ENCODE measurements at regions of chr1 and their contacts with region 1.

Region 1: GRCh38 chr1:161165742-161166668 is at the start of gene PPOX:
- DNase-seq: peak; percentile 78 to 95 (median 93)
- ATAC-seq: peak; percentile 94
- H3K4me3 ChIP-seq: peak within 1 kb of the TSS; percentile 93
- H3K4me3 Mint-ChIP-seq: peak within 1 kb of the TSS; percentile 86 to 98 (median 94)
- H3K27ac ChIP-seq: peak within 1 kb of the TSS; percentile 86
- H3K27ac Mint-ChIP-seq: peak within 1 kb of the TSS; percentile 93 to 99 (median 99)
- H3K4me1 ChIP-seq: peaks cover 14 to 17% of the 10 kb centered on the region in 2 donors
- H3K4me1 Mint-ChIP-seq: peaks cover 38 to 77% (median 66%) of the 10 kb centered on the region in 7 donors
- H3K27me3 ChIP-seq: no peaks in the 10 kb centered on the region
- H3K27me3 Mint-ChIP-seq: no peaks in the 10 kb centered on the region
- total RNA-seq, gene PPOX: 39.7 to 76.2 (median 43.4) TPM

Region 2: GRCh38 chr1:161008924-161009510 is 157.0 kb before region 1 on chr1:
- CTCF ChIA-PET with region 1: no interaction called
- POLR2A ChIA-PET with region 1: no interaction called
- intact Hi-C with region 1: no loop called
- DNase-seq: no peak
- ATAC-seq: no peak
- H3K4me3 ChIP-seq: no peak overlapping the region
- H3K4me3 Mint-ChIP-seq: no peak overlapping the region
- H3K27ac ChIP-seq: no peak overlapping the region
- H3K27ac Mint-ChIP-seq: peak overlapping the region in 2 of 9 donors; percentile 47 to 70
- H3K4me1 ChIP-seq: peaks cover 10 to 24% of the 10 kb centered on the region in 2 donors
- H3K4me1 Mint-ChIP-seq: peaks cover 19 to 33% (median 24%) of the 10 kb centered on the region in 7 donors
- H3K27me3 ChIP-seq: no peaks in the 10 kb centered on the region
- H3K27me3 Mint-ChIP-seq: no peaks in the 10 kb centered on the region

Region 3: DNA sequence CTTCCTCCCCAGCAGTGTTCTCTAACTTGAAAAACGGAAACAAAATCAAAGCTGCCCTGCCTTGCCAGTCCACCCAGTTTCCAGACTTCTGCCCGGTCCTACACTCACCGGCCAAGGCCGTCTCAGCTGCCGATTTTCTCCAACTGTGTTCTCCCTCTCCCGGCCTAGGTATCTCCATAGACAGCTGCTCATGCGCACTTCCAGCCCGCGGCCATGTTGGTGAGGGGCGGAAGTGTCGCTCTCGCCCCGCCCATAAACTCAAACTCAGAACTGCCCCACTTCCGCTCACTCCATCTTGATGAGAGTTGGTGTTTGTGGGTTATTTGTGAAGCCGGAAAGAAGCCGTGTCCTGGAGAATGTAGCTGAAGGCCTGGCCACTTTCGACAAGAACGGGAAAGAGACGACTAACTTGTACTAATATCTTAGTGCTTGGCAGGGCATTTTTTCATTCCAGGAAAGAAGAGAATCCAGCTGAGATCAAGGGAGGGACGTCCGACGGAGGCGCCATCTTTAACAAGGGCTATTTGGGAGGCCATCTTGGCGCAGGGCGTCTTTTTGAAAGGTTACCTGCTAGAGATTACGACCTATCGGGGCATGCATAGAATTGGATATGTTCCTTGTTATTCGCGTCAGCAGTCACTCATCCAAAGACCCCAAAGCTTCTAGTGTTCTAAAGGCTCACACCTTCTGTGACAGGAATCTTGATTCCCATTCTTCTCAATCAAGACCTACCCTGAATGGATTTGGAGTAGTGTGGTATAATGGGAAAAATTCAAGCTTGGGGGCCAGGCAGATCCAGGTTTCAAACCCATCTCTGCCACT is 120.0 kb before region 1 on chr1 and contains the start of gene USF1:
- CTCF ChIA-PET with region 1: interaction called, 3 read pairs
- POLR2A ChIA-PET with region 1: interaction called, 14 read pairs
- intact Hi-C with region 1: no loop called
- DNase-seq: peak; percentile 84 to 96 (median 93)
- ATAC-seq: peak; percentile 89
- H3K4me3 ChIP-seq: peak within 1 kb of the TSS; percentile 93
- H3K4me3 Mint-ChIP-seq: peak within 1 kb of the TSS; percentile 93 to 100 (median 97)
- H3K27ac ChIP-seq: peak within 1 kb of the TSS; percentile 92
- H3K27ac Mint-ChIP-seq: peak within 1 kb of the TSS; percentile 92 to 100 (median 99)
- H3K4me1 ChIP-seq: peaks cover 17 to 23% of the 10 kb centered on the region in 2 donors
- H3K4me1 Mint-ChIP-seq: peaks cover 41 to 54% (median 49%) of the 10 kb centered on the region in 7 donors
- H3K27me3 ChIP-seq: no peaks in the 10 kb centered on the region
- H3K27me3 Mint-ChIP-seq: no peaks in the 10 kb centered on the region
- total RNA-seq, gene USF1: 71.6 to 115 (median 91.7) TPM

Region 4: DNA sequence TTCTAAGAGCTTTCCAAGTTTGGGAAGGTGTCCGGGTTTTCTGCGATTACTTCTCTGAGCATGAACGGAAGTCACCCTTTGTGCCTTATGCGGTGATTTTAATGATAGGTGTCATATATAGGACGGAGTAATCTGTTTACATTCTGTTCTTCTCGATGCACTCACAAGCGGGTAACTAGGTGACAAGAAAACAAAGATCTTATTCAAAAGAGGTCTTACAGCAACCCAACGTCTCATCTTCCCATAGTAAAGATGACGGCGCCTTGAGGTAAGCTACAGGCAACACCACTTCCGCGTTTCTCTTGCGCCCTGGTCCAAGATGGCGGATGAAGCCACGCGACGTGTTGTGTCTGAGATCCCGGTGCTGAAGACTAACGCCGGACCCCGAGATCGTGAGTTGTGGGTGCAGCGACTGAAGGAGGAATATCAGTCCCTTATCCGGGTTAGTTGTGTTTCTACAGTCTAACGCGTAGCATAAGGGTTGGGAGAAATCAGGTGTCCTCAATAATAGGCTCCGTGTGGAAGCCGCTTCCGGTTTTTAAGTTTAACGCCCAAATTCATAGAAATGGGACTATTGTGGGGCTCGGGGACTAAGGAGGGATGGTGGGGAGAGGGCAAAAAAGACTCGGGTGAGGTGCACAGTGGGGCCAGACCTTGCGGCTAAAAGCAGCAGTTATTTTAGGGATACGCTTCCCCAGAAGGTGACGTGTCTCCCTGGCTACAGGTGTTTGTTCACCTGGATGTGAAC is 12.2 kb before region 1 on chr1 and contains the start of gene UFC1:
- CTCF ChIA-PET with region 1: interaction called, 18 read pairs
- POLR2A ChIA-PET with region 1: interaction called, 63 read pairs
- intact Hi-C with region 1: loop called (anchors 1 to 2 kb)
- DNase-seq: peak; percentile 72 to 92 (median 87)
- ATAC-seq: peak; percentile 94
- H3K4me3 ChIP-seq: peak within 1 kb of the TSS; percentile 86
- H3K4me3 Mint-ChIP-seq: peak within 1 kb of the TSS; percentile 93 to 100 (median 100)
- H3K27ac ChIP-seq: peak within 1 kb of the TSS; percentile 88
- H3K27ac Mint-ChIP-seq: peak within 1 kb of the TSS; percentile 100
- H3K4me1 ChIP-seq: peaks cover 13 to 20% of the 10 kb centered on the region in 2 donors
- H3K4me1 Mint-ChIP-seq: peaks cover 7 to 39% (median 35%) of the 10 kb centered on the region in 7 donors
- H3K27me3 ChIP-seq: no peaks in the 10 kb centered on the region
- H3K27me3 Mint-ChIP-seq: no peaks in the 10 kb centered on the region
- total RNA-seq, gene UFC1: 83.7 to 116 (median 98.9) TPM

Region 5: GRCh38 chr1:161192476-161193465 is 26.8 kb after region 1 on chr1:
- CTCF ChIA-PET with region 1: interaction called, 27 read pairs
- POLR2A ChIA-PET with region 1: interaction called, 35 read pairs
- intact Hi-C with region 1: no loop called
- DNase-seq: peak in 8 of 9 donors; percentile 53 to 80 (median 74)
- ATAC-seq: peak; percentile 95
- H3K4me3 ChIP-seq: no peak overlapping the region
- H3K4me3 Mint-ChIP-seq: peak overlapping the region in 5 of 10 donors; percentile 18 to 50 (median 29)
- H3K27ac ChIP-seq: no peak overlapping the region
- H3K27ac Mint-ChIP-seq: peak overlapping the region; percentile 51 to 93 (median 85)
- H3K4me1 ChIP-seq: peaks cover 34 to 53% of the 10 kb centered on the region in 2 donors
- H3K4me1 Mint-ChIP-seq: peaks cover 30 to 68% (median 42%) of the 10 kb centered on the region in 7 donors
- H3K27me3 ChIP-seq: no peaks in the 10 kb centered on the region
- H3K27me3 Mint-ChIP-seq: no peaks in the 10 kb centered on the region

Region 6: DNA sequence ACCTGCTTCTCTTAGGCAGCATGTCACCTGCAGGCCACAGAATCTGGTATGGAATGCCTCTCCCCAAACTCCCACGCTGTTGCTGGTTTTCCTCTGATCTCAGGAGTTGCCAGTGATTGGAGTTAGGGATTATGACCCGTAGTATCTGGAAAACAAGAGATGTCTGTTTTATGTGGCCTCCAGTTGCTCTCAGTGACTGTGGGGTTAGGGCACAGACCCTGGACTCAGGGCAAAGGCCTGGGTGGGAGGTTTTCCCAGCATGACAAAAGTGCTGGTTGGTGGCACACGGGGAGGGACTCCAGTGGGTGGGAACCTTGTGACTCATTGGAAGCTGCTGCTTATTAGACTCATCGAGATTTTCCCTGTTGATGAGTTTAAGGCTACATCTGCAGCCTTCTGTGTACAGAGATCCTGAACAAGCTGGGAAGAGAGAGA is 72.1 kb after region 1 on chr1 and contains the start of gene NR1I3:
- CTCF ChIA-PET with region 1: no interaction called
- POLR2A ChIA-PET with region 1: no interaction called
- intact Hi-C with region 1: no loop called
- DNase-seq: no peak
- ATAC-seq: no peak
- H3K4me3 ChIP-seq: no peak within 1 kb of the TSS
- H3K4me3 Mint-ChIP-seq: no peak within 1 kb of the TSS
- H3K27ac ChIP-seq: no peak within 1 kb of the TSS
- H3K27ac Mint-ChIP-seq: no peak within 1 kb of the TSS
- H3K4me1 ChIP-seq: no peaks in the 10 kb centered on the region
- H3K4me1 Mint-ChIP-seq: peaks cover 0 to 2% (median 0%) of the 10 kb centered on the region in 7 donors
- H3K27me3 ChIP-seq: no peaks in the 10 kb centered on the region
- H3K27me3 Mint-ChIP-seq: peaks cover 0 to 12% (median 8%) of the 10 kb centered on the region in 5 donors
- total RNA-seq, gene NR1I3: not detected

Region 7: GRCh38 chr1:161290779-161291178 is 124.8 kb after region 1 on chr1:
- CTCF ChIA-PET with region 1: interaction called, 4 read pairs
- POLR2A ChIA-PET with region 1: interaction called, 5 read pairs
- intact Hi-C with region 1: loop called in 1 of 2 experiments (anchors 1 kb)
- DNase-seq: no peak
- ATAC-seq: no peak
- H3K4me3 ChIP-seq: no peak overlapping the region
- H3K4me3 Mint-ChIP-seq: no peak overlapping the region
- H3K27ac ChIP-seq: no peak overlapping the region
- H3K27ac Mint-ChIP-seq: peak overlapping the region in 2 of 9 donors; percentile 28 to 61
- H3K4me1 ChIP-seq: no peaks in the 10 kb centered on the region
- H3K4me1 Mint-ChIP-seq: peaks cover 0 to 6% (median 0%) of the 10 kb centered on the region in 7 donors
- H3K27me3 ChIP-seq: no peaks in the 10 kb centered on the region
- H3K27me3 Mint-ChIP-seq: no peaks in the 10 kb centered on the region

Region 8: GRCh38 chr1:161389691-161390558 is 223.9 kb after region 1 on chr1:
- CTCF ChIA-PET with region 1: interaction called, 4 read pairs
- POLR2A ChIA-PET with region 1: interaction called, 4 read pairs
- intact Hi-C with region 1: loop called in 1 of 2 experiments (anchors 5 kb)
- DNase-seq: peak; percentile 85 to 96 (median 92)
- ATAC-seq: peak; percentile 97
- H3K4me3 ChIP-seq: peak overlapping the region; percentile 86
- H3K4me3 Mint-ChIP-seq: peak overlapping the region; percentile 88 to 95 (median 92)
- H3K27ac ChIP-seq: peak overlapping the region; percentile 93
- H3K27ac Mint-ChIP-seq: peak overlapping the region; percentile 93 to 99 (median 98)
- H3K4me1 ChIP-seq: peaks cover 3 to 4% of the 10 kb centered on the region in 2 donors
- H3K4me1 Mint-ChIP-seq: peaks cover 0 to 50% (median 28%) of the 10 kb centered on the region in 7 donors
- H3K27me3 ChIP-seq: no peaks in the 10 kb centered on the region
- H3K27me3 Mint-ChIP-seq: no peaks in the 10 kb centered on the region

Measured in naive thymus-derived CD4-positive, alpha-beta T cell (primary cell).